Activated B cell treated with CpG ODN at 0.5 μM for 24 hours (primary cell): ENCODE measurements at regions of chr21 and their contacts with region 1.

Region 1: GRCh38 chr21:29145354-29145782 is 14.9 kb downstream of the MAP3K7CL start:
- DNase-seq: no peak
- ATAC-seq: no peak
- H3K4me3 Mint-ChIP-seq: no peak overlapping the region
- H3K27ac Mint-ChIP-seq: no peak overlapping the region
- H3K4me1 Mint-ChIP-seq: peaks cover 5% of the 10 kb centered on the region
- H3K27me3 Mint-ChIP-seq: no peaks in the 10 kb centered on the region
- CTCF ChIP-seq: no peak

Region 2: GRCh38 chr21:29114765-29115164 is 30.6 kb before region 1 on chr21:
- CTCF ChIA-PET with region 1: no interaction called
- POLR2A ChIA-PET with region 1: no interaction called
- intact Hi-C with region 1: loop called (anchors 5 kb)
- DNase-seq: no peak
- ATAC-seq: no peak
- H3K4me3 Mint-ChIP-seq: no peak overlapping the region
- H3K27ac Mint-ChIP-seq: no peak overlapping the region
- H3K4me1 Mint-ChIP-seq: peaks cover 10% of the 10 kb centered on the region
- H3K27me3 Mint-ChIP-seq: no peaks in the 10 kb centered on the region
- CTCF ChIP-seq: no peak